IMR-90 (cell line): ENCODE measurements at regions of chr1 and their contacts with region 1.

Region 1: GRCh38 chr1:64136752-64137411 is 66.5 kb upstream of the UBE2U start:
- DNase-seq: peak; percentile 94
- ATAC-seq: peak; percentile 79
- H3K4me3 ChIP-seq: no peak overlapping the region
- H3K27ac ChIP-seq: no peak overlapping the region
- H3K4me1 ChIP-seq: peaks cover 7% of the 10 kb centered on the region; the same call in 1 of the 2 replicates
- H3K27me3 ChIP-seq: no peaks in the 10 kb centered on the region
- CTCF ChIP-seq: peak; percentile 90
- POLR2A ChIP-seq: no peak
- RAD21 ChIP-seq: peak; percentile 90

Region 2: DNA sequence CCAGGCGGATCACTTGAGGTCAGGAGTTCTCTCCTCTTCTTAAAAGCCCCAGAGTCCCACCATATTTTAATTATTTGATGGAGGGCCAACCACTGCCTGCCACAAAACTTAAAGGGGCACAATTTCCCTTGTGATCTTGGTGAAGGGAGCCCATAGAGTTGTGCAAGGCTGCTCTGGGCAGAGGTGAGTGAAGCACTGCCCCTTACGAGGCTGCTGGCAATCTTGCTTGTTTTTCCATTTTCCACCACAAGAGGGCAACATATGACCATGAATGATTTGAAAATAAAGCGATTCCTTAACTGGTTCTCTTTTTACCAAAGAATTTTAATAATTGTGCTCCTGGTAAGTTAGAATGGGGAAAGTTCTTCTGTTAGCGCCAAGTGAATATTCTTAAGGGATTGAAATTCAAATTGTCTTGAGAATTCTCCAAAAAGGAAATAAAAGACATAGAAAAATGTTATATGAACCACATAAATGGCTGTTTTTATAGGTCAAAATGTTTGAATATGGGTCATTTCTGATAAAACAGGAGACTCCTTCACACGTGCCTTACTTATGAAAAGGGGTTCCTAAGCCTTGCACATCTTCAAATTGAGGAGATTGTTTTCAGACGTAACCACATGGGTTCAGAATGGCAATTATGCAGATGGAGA is 521.0 kb before region 1 on chr1:
- CTCF ChIA-PET with region 1: no interaction called
- POLR2A ChIA-PET with region 1: no interaction called
- dilution Hi-C with region 1: no loop called
- in situ Hi-C with region 1: loop called (anchors 10 kb)
- intact Hi-C with region 1: loop called (anchors 1 kb)
- DNase-seq: peak; percentile 75
- ATAC-seq: peak; percentile 78
- H3K4me3 ChIP-seq: no peak overlapping the region
- H3K27ac ChIP-seq: no peak overlapping the region
- H3K4me1 ChIP-seq: peaks cover 11% of the 10 kb centered on the region
- H3K27me3 ChIP-seq: no peaks in the 10 kb centered on the region
- CTCF ChIP-seq: peak; percentile 81
- POLR2A ChIP-seq: no peak
- RAD21 ChIP-seq: peak; percentile 85

Region 3: DNA sequence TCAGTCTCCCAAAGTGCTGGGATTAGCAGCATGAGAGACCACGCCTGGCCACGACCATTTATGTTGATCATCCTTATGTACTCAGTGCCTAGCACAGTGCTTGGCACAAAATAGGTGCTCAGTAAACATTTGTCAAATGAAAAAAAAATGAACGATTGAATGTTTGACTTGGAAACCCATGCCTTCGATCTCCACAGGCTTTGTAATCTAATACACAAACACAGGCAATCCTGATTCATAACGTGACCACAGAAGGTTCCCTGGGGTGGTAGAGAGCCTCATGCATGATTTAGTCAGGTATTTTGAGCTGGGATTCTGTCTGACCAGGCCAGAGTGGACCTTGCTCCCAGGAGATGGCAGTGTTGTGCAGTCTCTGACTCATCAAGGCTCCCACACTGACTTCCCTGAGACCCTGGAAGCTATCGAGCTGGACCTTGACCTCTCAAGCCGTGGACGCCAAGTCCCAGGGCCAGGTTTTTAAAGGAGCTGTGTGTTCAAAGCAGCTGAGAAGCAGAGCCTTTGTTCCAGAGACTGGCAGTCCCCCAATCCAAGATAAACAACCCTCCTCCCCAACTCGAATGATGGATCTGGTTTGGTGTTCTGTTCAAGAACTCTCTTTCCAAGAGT is 462.5 kb before region 1 on chr1:
- CTCF ChIA-PET with region 1: interaction called, 13 read pairs
- POLR2A ChIA-PET with region 1: no interaction called
- dilution Hi-C with region 1: no loop called
- in situ Hi-C with region 1: loop called (anchors 10 kb)
- intact Hi-C with region 1: loop called (anchors 1 kb)
- DNase-seq: peak; percentile 93
- ATAC-seq: peak; percentile 99
- H3K4me3 ChIP-seq: no peak overlapping the region
- H3K27ac ChIP-seq: no peak overlapping the region
- H3K4me1 ChIP-seq: no peaks in the 10 kb centered on the region
- H3K27me3 ChIP-seq: no peaks in the 10 kb centered on the region
- CTCF ChIP-seq: peak; percentile 84
- POLR2A ChIP-seq: no peak
- RAD21 ChIP-seq: peak; percentile 83

Region 4: DNA sequence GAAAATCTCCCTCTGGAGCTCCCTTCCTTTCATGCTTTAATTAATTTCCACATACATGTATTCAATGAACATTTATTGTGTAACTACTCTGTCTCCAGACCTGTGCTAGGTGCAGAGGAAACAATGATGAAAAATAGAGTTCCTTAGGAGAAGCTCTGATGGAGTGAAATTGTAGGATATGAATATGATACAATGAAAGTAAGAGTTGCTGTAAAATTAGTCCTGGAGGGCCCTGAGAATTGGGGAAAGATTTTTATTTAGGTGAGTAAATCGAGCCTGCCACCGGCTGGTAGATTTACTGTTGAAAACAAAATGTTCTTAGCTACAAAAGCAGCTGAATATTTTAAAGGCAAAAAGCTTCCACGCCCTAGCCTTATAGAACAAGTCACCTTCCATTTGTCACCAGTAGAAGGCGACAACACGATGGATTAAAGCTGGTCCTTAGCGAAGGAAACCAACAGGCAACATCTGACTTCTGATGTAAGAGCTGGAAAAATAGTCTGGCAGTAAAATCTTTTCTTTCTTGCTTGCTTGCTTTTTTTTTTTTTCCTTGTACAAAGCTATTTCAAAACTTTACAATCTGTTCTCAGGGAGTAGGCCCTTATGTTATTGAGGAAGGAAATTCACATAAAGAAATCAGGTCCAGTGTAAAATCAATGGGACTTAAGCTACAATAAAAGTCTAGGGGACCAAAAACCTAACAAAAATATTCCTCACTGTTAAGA is 445.0 kb before region 1 on chr1:
- CTCF ChIA-PET with region 1: interaction called, 41 read pairs
- POLR2A ChIA-PET with region 1: no interaction called
- dilution Hi-C with region 1: no loop called
- in situ Hi-C with region 1: no loop called
- intact Hi-C with region 1: loop called (anchors 1 kb)
- DNase-seq: peak; percentile 94
- ATAC-seq: peak; percentile 89
- H3K4me3 ChIP-seq: no peak overlapping the region
- H3K27ac ChIP-seq: no peak overlapping the region
- H3K4me1 ChIP-seq: peaks cover 2% of the 10 kb centered on the region; the same call in 1 of the 2 replicates
- H3K27me3 ChIP-seq: no peaks in the 10 kb centered on the region; the same call in 1 of the 2 replicates
- CTCF ChIP-seq: peak; percentile 84
- POLR2A ChIP-seq: no peak
- RAD21 ChIP-seq: peak; percentile 87

Region 5: GRCh38 chr1:63779338-63780211 is 357.3 kb before region 1 on chr1:
- CTCF ChIA-PET with region 1: interaction called, 6 read pairs
- POLR2A ChIA-PET with region 1: no interaction called
- dilution Hi-C with region 1: no loop called
- in situ Hi-C with region 1: loop called (anchors 10 kb)
- intact Hi-C with region 1: loop called (anchors 1 kb)
- DNase-seq: peak; percentile 75
- ATAC-seq: peak; percentile 66
- H3K4me3 ChIP-seq: no peak overlapping the region
- H3K27ac ChIP-seq: peak overlapping the region; percentile 90
- H3K4me1 ChIP-seq: peaks cover 13% of the 10 kb centered on the region
- H3K27me3 ChIP-seq: peaks cover 1% of the 10 kb centered on the region; the same call in 1 of the 2 replicates
- CTCF ChIP-seq: no peak
- POLR2A ChIP-seq: no peak
- RAD21 ChIP-seq: no peak

Region 6: GRCh38 chr1:64519901-64520300 is 383.0 kb after region 1 on chr1:
- CTCF ChIA-PET with region 1: no interaction called
- POLR2A ChIA-PET with region 1: no interaction called
- dilution Hi-C with region 1: no loop called
- in situ Hi-C with region 1: no loop called
- intact Hi-C with region 1: no loop called
- DNase-seq: peak; percentile 56
- ATAC-seq: peak; percentile 60
- H3K4me3 ChIP-seq: no peak overlapping the region
- H3K27ac ChIP-seq: no peak overlapping the region
- H3K4me1 ChIP-seq: peaks cover 11% of the 10 kb centered on the region
- H3K27me3 ChIP-seq: no peaks in the 10 kb centered on the region
- CTCF ChIP-seq: no peak
- POLR2A ChIP-seq: no peak
- RAD21 ChIP-seq: no peak